ENCODE measurements at regions of chr11 and their contacts with region 1.

Region 1: DNA sequence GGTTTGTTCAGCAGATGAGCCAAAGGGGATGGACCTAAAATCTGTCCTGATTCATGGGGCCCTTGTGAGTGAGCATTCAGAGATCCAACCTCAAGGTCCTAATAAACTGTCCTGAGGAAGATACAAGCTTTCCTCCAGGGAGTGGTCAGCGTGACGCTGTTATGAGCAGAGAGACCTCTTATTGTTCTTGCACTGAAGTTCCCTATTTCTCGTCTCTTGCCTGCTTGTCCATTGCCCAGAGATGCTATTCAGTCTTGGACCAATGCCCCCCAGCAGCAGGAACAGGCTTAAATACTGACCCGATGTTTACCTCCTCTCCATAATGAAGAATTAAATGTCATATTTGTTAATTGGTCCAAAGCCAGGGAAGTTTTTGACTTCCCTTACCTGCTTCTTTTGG is 225.2 kb upstream of the PGR start:
- DNase-seq: no peak
- ATAC-seq: no peak
- H3K4me3 ChIP-seq: no peak overlapping the region
- H3K4me3 Mint-ChIP-seq: no peak overlapping the region
- H3K27ac ChIP-seq: no peak overlapping the region
- H3K27ac Mint-ChIP-seq: no peak overlapping the region
- H3K4me1 ChIP-seq: no peaks in the 10 kb centered on the region
- H3K4me1 Mint-ChIP-seq: no peaks in the 10 kb centered on the region
- H3K27me3 ChIP-seq: no peaks in the 10 kb centered on the region
- H3K27me3 Mint-ChIP-seq: no peaks in the 10 kb centered on the region

Region 2: DNA sequence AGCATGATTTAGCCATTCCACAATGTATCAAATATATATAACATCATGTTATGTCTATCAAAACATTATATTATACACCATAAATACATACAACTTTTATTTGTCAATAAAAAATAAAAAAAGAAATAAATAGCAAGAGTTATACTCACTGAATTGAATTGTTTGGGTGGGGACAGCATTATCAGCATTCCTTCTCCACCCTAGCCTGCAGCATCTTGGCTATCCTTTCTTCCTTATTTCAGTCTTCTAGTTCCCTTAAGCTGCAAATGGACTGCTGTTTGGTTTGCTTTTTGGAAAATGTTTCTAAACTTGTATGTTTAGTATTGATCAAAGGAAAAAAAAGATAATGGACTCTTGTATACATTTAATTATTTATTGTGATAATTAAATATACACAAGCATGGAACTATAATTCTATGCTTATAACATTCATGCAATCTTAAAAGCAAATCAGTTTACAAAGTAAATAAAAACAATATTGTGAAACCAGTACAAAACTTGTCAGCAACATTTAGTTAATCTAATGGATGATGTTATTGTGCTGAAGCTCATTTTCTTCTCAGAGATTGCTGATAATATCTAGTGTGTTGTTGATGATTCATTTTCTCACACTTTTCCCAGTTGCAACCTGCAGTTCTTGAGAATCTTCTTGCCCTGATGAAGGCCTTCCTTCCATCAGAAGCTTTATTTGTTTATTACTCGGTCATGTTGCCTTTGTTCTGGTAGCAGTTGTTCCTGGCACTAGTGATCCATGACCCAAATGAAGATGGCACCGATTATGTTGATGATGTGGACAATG is 662.7 kb before region 1 on chr11:
- CTCF ChIA-PET with region 1: no interaction called
- POLR2A ChIA-PET with region 1: interaction called in 1 of 2 experiments, 10 read pairs
- DNase-seq: no peak
- ATAC-seq: no peak
- H3K4me3 ChIP-seq: no peak overlapping the region
- H3K4me3 Mint-ChIP-seq: no peak overlapping the region
- H3K27ac ChIP-seq: no peak overlapping the region
- H3K27ac Mint-ChIP-seq: no peak overlapping the region
- H3K4me1 ChIP-seq: peaks cover 0 to 4% of the 10 kb centered on the region in 2 experiments
- H3K4me1 Mint-ChIP-seq: peaks cover 6 to 13% (median 9%) of the 10 kb centered on the region in 3 donors
- H3K27me3 ChIP-seq: peaks cover 0 to 7% of the 10 kb centered on the region in 2 experiments
- H3K27me3 Mint-ChIP-seq: peaks cover 16 to 17% of the 10 kb centered on the region in 2 donors

Region 3: GRCh38 chr11:101180481-101180880 is 174.3 kb before region 1 on chr11:
- CTCF ChIA-PET with region 1: no interaction called
- POLR2A ChIA-PET with region 1: no interaction called
- DNase-seq: no peak
- ATAC-seq: no peak
- H3K4me3 ChIP-seq: no peak overlapping the region
- H3K4me3 Mint-ChIP-seq: no peak overlapping the region
- H3K27ac ChIP-seq: no peak overlapping the region
- H3K27ac Mint-ChIP-seq: no peak overlapping the region
- H3K4me1 ChIP-seq: no peaks in the 10 kb centered on the region
- H3K4me1 Mint-ChIP-seq: no peaks in the 10 kb centered on the region
- H3K27me3 ChIP-seq: no peaks in the 10 kb centered on the region
- H3K27me3 Mint-ChIP-seq: no peaks in the 10 kb centered on the region

Measured in T-cell (primary cell).